ENCODE measurements at regions of chr5 and their contacts with region 1.

Region 1: GRCh38 chr5:140221697-140222223 is 46.8 kb downstream of the CYSTM1 start:
- DNase-seq: no peak
- H3K4me3 Mint-ChIP-seq: no peak overlapping the region
- H3K27ac Mint-ChIP-seq: no peak overlapping the region
- H3K4me1 Mint-ChIP-seq: peaks cover 29% of the 10 kb centered on the region
- H3K27me3 Mint-ChIP-seq: no peaks in the 10 kb centered on the region

Region 2: GRCh38 chr5:140174465-140175366 is 47.0 kb before region 1 on chr5 and contains the start of gene CYSTM1:
- CTCF ChIA-PET with region 1: no interaction called
- intact Hi-C with region 1: loop called (anchors 1 kb)
- DNase-seq: peak; percentile 97
- H3K4me3 Mint-ChIP-seq: peak within 1 kb of the TSS; percentile 92
- H3K27ac Mint-ChIP-seq: peak within 1 kb of the TSS; percentile 66
- H3K4me1 Mint-ChIP-seq: peaks cover 12% of the 10 kb centered on the region
- H3K27me3 Mint-ChIP-seq: peaks cover 2% of the 10 kb centered on the region
- total RNA-seq, gene CYSTM1: 22.3 to 25.1 TPM

Region 3: DNA sequence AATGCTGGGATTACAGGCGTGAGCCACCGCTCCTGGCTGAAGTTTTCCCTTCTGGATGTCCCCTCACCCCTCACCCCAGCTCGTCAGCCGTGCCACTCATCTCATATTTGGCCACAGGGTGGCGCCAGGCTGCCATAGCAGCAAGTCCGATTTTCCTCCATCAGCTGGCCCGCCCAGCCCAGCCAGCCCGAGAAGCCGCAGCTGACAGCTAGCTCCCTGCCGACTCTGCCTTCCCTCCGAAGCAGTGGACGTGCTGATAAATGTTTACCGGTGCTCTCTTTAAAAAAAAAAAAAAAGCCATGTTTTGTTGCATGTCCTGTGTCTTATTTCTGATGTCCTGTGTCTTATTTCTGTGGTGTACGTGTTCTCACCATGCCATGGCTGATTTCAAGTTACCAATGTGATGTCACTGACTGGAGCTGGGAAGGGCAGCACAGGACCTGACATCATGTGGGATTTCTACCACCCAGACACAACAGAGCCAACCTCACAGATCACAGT is 22.8 kb after region 1 on chr5:
- CTCF ChIA-PET with region 1: interaction called, 13 read pairs
- intact Hi-C with region 1: no loop called
- DNase-seq: peak; percentile 91
- H3K4me3 Mint-ChIP-seq: no peak overlapping the region
- H3K27ac Mint-ChIP-seq: peak overlapping the region; percentile 65
- H3K4me1 Mint-ChIP-seq: peaks cover 27% of the 10 kb centered on the region
- H3K27me3 Mint-ChIP-seq: no peaks in the 10 kb centered on the region

Measured in activated naive CD4-positive, alpha-beta T cell treated with anti-CD3 and anti-CD28 coated beads for 36 hours (primary cell).